RWPE1 (cell line): ENCODE measurements at regions of chr6 and their contacts with region 1.

Region 1: DNA sequence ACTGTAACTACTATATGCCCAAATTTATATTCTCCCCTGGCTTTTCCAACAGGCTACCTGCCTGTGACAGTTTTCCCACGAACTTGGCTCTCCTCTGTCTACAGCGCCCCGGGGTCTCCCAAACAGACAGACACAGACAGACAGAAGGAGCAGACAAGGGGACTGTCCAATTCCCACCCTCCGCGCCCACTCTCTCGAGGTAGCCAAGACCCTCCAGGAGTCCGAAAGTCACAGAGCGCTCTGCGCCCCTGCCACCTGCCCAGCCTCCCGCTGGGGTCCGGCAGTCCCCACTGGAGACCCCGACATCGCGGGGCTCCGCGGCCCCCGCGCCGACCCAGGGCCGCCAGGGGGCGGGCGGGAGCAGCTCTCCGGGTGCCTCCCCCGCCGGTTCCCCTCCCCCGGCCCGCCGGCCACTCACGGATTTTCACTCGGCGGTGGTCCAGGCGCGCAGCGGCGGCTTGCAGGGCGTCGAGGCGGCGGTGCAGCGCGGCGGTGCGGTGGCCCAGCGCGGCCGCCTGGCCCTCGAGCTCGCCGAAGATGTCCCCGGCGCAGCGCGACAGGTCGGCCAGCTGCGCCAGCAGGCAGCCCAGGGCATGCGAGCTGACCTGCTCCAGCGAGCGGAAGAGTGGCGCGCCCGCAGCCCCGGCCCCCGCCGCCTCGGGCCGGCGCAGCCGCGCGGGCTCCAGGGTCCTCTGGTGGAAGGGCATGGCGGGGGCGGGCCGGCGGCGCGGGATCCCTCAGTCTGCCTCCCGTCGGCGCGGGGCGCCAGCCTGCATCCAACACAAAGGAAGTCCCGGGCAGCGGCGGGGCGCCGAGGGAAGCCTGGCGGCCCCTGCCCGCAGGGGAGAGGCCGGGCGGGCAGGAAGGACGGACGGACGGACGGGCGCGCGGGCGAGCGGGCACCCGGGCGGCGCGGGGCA is 81.3 kb upstream of the CCDC28A start:
- DNase-seq: peak; percentile 85
- H3K27ac ChIP-seq: peak overlapping the region; percentile 91
- CTCF ChIP-seq: peak; percentile 94

Region 2: DNA sequence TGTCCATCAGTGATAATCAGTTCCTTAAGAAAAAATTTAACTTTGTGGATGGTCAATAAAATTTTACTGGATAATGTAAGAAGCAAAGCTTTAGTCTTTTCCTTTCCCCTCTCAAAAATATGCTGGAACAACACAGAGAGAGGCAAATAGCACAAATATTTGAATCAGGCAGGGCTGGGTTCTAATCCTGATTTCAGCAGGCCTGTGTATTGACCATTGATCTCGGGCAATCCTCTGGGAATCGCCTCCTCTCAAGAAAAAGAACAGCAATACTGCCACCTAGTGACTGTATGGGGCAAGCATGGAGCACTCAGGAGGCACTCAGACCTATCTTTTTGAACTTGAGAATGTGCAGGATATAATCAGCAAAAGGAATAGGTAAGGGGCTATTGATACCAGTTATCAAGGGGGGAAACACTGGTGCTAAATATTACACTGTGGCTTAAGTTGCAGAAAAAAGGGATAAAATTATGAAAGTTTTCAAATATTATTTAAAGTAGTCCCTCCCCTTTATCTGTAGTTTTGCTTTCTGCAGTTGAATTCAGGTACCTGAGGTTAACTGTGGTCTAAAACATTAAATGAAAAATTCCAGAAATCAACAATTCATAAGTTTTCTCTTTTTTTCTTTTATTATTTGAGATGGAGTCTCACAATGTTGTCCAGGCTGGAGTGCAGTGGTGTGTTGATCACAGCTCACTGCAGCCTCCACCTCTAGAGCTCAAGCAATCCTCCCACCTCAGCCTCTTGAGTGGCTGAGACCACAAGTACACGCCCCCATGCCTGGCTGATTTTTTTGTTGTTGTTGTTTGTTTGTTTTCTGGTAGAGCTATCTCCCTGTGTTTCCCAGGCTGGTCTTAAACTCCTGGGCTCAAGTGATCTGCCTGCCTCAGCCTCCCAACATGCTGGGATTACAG is 101.3 kb before region 1 on chr6:
- CTCF ChIA-PET with region 1: interaction called, 12 read pairs
- POLR2A ChIA-PET with region 1: interaction called, 3 read pairs
- DNase-seq: peak; percentile 68
- H3K27ac ChIP-seq: peak overlapping the region; percentile 26; the same call in 1 of the 2 replicates
- CTCF ChIP-seq: peak; percentile 87